Vagina (tissue), 2 donors: ENCODE measurements at regions of chr20 and their contacts with region 1.

Region 1: DNA sequence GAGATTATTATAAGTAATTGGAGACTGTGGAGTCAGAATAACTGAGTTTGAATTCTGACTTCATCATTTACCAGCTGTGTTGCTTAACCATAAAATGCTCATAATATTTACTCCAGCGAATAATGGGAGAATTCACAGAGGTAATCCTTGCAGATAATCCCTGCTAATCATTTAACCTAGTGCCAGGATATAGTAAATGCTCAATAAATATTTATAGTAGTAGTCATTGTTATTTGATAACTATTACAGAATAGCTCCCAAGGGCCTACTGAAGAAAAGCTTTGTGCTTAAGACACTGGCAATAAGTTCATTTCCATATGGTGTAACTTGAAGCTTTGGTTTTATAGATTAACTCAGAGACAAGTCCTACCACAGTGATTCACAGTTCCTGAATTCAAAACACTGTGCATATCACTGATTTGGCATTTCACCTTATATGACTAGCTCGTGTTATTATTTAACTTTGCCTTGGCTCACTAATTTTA is 208.8 kb upstream of the PLCB4 start:
- DNase-seq: no peak
- H3K4me3 ChIP-seq: no peak overlapping the region
- H3K27ac ChIP-seq: no peak overlapping the region
- H3K4me1 ChIP-seq: peaks cover under 1% of the 10 kb centered on the region
- H3K27me3 ChIP-seq: no peaks in the 10 kb centered on the region
- CTCF ChIP-seq: no peak
- POLR2A ChIP-seq: no peak

Region 2: DNA sequence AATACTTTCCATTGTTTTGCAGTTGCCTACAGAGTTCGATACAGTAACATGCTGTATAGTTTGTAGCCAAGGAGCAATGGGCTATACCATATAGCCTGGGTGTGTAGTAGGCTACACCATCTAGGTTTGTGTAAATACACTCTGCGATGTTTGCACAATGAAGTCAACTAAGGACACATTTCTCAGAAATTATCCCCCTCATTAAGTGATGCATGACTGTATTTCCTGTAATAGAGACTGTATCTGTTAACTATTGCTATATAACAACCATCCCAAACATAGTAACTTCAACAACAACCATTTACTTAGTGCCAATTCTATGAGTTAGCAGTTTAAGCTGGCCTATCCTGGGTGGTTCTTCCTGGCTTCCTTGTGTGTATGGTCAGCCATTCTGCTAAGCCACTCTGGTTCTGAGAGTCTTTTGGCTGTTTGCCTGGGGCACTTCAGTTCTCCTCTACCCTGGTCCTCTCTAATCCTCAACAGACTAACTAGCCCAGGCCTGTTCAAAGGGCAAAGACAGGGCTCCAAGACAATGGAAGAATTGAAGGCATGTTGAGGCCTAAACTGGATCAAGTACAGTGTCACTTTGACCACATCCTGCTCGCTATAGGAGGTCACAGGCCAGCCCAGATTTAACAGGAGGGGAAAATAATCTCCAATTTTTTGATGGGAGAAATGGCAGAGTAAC is 604.0 kb before region 1 on chr20:
- intact Hi-C with region 1: no loop called
- DNase-seq: no peak
- H3K4me3 ChIP-seq: no peak overlapping the region
- H3K27ac ChIP-seq: no peak overlapping the region
- H3K4me1 ChIP-seq: no peaks in the 10 kb centered on the region
- H3K27me3 ChIP-seq: no peaks in the 10 kb centered on the region
- CTCF ChIP-seq: no peak
- POLR2A ChIP-seq: no peak

Region 3: GRCh38 chr20:8895472-8895871 is 35.4 kb after region 1 on chr20:
- intact Hi-C with region 1: loop called (anchors 5 kb)
- DNase-seq: no peak
- H3K4me3 ChIP-seq: no peak overlapping the region
- H3K27ac ChIP-seq: no peak overlapping the region
- H3K4me1 ChIP-seq: no peaks in the 10 kb centered on the region
- H3K27me3 ChIP-seq: no peaks in the 10 kb centered on the region
- CTCF ChIP-seq: no peak
- POLR2A ChIP-seq: no peak